ENCODE measurements at regions of chr7 and their contacts with region 1.

Region 1: GRCh38 chr7:37352974-37353948 is 95.4 kb downstream of the ELMO1 start:
- DNase-seq: peak; percentile 75
- H3K4me3 Mint-ChIP-seq: peak overlapping the region; percentile 87
- H3K27ac Mint-ChIP-seq: peak overlapping the region; percentile 88
- H3K4me1 Mint-ChIP-seq: peaks cover 77% of the 10 kb centered on the region
- H3K27me3 Mint-ChIP-seq: no peaks in the 10 kb centered on the region

Region 2: DNA sequence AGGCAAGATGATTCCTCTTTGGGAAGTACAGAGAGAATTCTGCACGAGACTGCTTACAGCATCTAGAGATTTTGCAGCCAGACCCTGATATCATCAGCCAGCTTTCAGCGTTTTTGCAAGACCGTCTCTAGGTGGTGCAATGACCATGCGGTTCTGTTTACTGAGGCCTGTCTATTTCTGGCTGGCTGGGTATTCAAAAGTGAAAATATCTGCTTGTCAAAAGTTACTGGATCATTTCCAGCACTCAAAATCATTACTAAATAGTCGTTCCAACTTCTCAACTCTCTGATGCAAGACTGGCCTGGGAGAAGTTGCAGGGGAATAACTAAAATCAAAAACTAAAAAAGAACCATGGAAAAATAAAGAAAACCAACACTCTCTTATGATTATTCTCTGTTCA is 144.7 kb before region 1 on chr7:
- CTCF ChIA-PET with region 1: interaction called, 10 read pairs
- POLR2A ChIA-PET with region 1: interaction called, 4 read pairs
- DNase-seq: peak; percentile 46
- H3K4me3 Mint-ChIP-seq: no peak overlapping the region
- H3K27ac Mint-ChIP-seq: no peak overlapping the region
- H3K4me1 Mint-ChIP-seq: peaks cover 18% of the 10 kb centered on the region
- H3K27me3 Mint-ChIP-seq: no peaks in the 10 kb centered on the region

Region 3: GRCh38 chr7:37284805-37285231 is 68.4 kb before region 1 on chr7:
- CTCF ChIA-PET with region 1: interaction called, 26 read pairs
- POLR2A ChIA-PET with region 1: interaction called, 3 read pairs
- DNase-seq: peak; percentile 42
- H3K4me3 Mint-ChIP-seq: no peak overlapping the region
- H3K27ac Mint-ChIP-seq: no peak overlapping the region
- H3K4me1 Mint-ChIP-seq: peaks cover 37% of the 10 kb centered on the region
- H3K27me3 Mint-ChIP-seq: no peaks in the 10 kb centered on the region

Region 4: GRCh38 chr7:37365405-37365804 is 12.1 kb after region 1 on chr7:
- CTCF ChIA-PET with region 1: interaction called, 10 read pairs
- POLR2A ChIA-PET with region 1: interaction called, 15 read pairs
- DNase-seq: no peak
- H3K4me3 Mint-ChIP-seq: no peak overlapping the region
- H3K27ac Mint-ChIP-seq: no peak overlapping the region
- H3K4me1 Mint-ChIP-seq: peaks cover 52% of the 10 kb centered on the region
- H3K27me3 Mint-ChIP-seq: peaks cover 5% of the 10 kb centered on the region

Region 5: DNA sequence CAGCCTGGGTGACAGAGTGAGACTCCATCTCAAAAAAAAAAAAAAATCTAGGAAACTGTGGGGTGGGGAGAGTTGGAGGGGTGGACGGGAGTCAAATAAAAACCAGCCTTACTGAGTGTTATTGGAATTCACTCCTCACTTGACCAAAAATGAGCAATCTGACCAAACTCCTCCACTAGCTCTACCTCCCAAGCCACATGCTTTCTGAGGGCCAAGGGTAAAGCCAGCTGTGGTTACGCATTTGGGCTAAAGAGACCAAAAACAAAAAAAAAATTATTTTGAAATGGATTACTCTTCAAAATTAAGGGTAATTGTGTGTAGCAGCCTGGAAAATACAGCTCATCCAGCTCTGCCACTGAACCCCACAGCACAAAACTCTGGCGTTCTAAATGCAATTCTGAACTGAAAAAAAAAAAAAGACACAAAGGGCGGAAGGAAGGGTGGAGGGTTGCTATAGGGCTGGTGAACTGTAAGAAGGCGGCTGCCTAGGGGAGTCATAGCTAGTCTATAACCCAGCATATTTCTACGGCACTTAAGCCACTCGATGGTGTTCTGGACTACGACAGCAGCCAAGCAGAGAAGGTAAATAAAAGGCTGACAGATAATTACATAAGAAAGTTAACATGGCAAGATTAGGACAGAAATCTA is 87.6 kb after region 1 on chr7:
- CTCF ChIA-PET with region 1: interaction called, 3 read pairs
- POLR2A ChIA-PET with region 1: interaction called, 56 read pairs
- DNase-seq: peak; percentile 49
- H3K4me3 Mint-ChIP-seq: peak overlapping the region; percentile 52
- H3K27ac Mint-ChIP-seq: peak overlapping the region; percentile 89
- H3K4me1 Mint-ChIP-seq: peaks cover 72% of the 10 kb centered on the region
- H3K27me3 Mint-ChIP-seq: no peaks in the 10 kb centered on the region

Region 6: GRCh38 chr7:37467002-37467401 is 113.7 kb after region 1 on chr7:
- CTCF ChIA-PET with region 1: no interaction called
- POLR2A ChIA-PET with region 1: no interaction called
- DNase-seq: no peak
- H3K4me3 Mint-ChIP-seq: no peak overlapping the region
- H3K27ac Mint-ChIP-seq: no peak overlapping the region
- H3K4me1 Mint-ChIP-seq: peaks cover 4% of the 10 kb centered on the region
- H3K27me3 Mint-ChIP-seq: peaks cover 10% of the 10 kb centered on the region

Region 7: GRCh38 chr7:37495574-37496184 is 142.4 kb after region 1 on chr7:
- CTCF ChIA-PET with region 1: interaction called, 20 read pairs
- POLR2A ChIA-PET with region 1: no interaction called
- DNase-seq: no peak
- H3K4me3 Mint-ChIP-seq: no peak overlapping the region
- H3K27ac Mint-ChIP-seq: no peak overlapping the region
- H3K4me1 Mint-ChIP-seq: peaks cover 7% of the 10 kb centered on the region
- H3K27me3 Mint-ChIP-seq: no peaks in the 10 kb centered on the region